Activated CD8-positive, alpha-beta T cell treated with anti-CD3 and anti-CD28 coated beads for 36 hours (primary cell): ENCODE measurements at regions of chr7 and their contacts with region 1.

Region 1: GRCh38 chr7:106285051-106285854 is 470 bp upstream of the NAMPT start:
- DNase-seq: peak; percentile 100
- ATAC-seq: peak; percentile 85
- H3K4me3 Mint-ChIP-seq: peak overlapping the region; percentile 88
- H3K27ac Mint-ChIP-seq: peak overlapping the region; percentile 99
- H3K4me1 Mint-ChIP-seq: peaks cover 35% of the 10 kb centered on the region
- H3K27me3 Mint-ChIP-seq: no peaks in the 10 kb centered on the region
- CTCF ChIP-seq: no peak

Region 2: DNA sequence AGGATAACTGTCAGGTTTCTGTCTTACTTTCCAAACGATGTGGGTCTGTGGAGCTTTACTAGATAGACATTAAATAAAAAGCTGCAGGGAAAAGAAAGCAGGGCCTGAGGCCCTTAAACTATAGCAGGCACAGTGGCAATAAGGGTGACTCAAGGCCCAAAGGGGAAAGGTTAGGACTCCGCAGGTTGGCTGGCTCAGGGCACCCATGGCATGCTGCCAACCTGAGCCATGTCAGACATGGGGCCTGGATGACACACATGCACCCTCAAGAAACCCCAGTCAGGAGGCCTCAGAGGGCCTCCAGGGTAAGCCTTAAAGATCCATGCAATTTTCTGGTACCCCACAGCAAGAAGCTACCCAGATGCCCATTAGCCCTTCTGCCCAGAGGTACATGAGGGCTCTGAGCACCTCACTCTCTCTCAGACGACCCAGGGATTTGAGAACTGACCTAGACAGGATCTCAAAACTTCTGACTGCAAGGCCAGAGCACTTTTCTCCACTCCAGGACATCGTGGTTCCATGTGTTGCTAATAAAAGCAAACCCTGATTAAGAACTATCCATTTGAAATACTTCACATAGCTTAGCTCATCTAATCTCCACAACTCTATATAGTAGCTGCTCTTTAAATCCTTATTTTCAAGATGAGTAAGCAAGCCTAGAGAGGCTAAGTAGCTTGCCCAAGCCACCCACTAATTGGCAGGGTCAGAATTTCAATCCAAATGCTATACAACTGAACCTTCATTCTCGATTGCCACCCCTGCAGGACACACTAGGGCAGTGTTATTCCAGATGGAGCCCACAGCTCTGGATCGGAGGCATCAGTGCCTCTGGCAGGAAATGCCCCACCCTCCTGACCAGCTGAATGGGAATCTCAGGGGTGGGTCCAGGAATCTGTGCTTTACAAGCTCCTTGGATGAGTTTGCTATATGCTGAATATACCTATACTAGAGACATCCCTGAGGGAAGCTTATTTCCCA is 571.5 kb before region 1 on chr7:
- CTCF ChIA-PET with region 1: no interaction called
- POLR2A ChIA-PET with region 1: no interaction called
- intact Hi-C with region 1: no loop called
- DNase-seq: no peak
- ATAC-seq: no peak
- H3K4me3 Mint-ChIP-seq: no peak overlapping the region
- H3K27ac Mint-ChIP-seq: no peak overlapping the region
- H3K4me1 Mint-ChIP-seq: no peaks in the 10 kb centered on the region
- H3K27me3 Mint-ChIP-seq: no peaks in the 10 kb centered on the region
- CTCF ChIP-seq: no peak

Region 3: DNA sequence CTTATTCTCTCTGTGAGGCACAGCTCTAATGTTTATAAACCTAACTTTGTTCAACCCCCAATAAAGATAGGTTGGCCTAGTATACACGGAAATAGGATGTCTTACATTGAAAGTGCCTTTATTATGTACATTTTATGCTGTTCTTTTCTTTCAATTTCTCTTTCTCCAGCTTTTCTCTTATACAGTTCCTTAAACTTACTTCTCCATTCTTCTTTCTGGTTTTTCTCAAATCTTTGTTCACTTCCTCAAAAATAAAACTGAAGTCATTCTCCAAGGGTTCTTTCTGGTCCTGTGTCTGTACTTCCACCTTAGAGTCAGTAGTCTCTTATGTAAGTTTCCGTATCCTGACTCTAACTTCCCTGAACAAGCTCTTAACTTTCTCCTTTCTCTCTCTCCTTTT is 28.7 kb after region 1 on chr7:
- CTCF ChIA-PET with region 1: interaction called, 4 read pairs
- POLR2A ChIA-PET with region 1: interaction called, 4 read pairs
- intact Hi-C with region 1: loop called (anchors 2 kb)
- DNase-seq: no peak
- ATAC-seq: no peak
- H3K4me3 Mint-ChIP-seq: no peak overlapping the region
- H3K27ac Mint-ChIP-seq: peak overlapping the region; percentile 60
- H3K4me1 Mint-ChIP-seq: peaks cover 21% of the 10 kb centered on the region
- H3K27me3 Mint-ChIP-seq: peaks cover 27% of the 10 kb centered on the region
- CTCF ChIP-seq: no peak

Region 4: DNA sequence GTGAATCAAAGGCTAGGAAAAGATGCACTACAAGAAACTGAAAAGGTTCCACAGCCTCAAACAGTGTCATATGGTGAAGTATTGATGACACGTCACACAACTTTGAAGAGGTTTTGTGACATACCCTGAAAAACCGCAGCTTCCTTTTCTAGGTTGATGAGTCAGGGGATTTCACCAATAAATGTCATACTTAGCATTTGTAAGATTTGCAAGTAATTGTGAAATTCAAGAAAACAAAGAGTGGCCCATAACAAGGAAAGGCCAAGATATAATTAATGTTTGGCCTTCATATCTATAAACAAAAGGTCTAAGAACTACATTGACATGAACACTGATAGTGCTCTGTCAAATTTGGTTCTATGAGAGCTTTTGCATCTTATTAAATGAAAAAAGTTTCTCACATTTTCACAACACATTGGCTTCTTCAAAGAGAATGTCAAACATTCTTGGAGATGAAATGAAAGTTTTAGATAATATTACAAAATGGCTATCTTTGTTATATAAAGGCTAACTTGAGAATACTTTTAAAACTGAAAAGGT is 61.5 kb after region 1 on chr7:
- CTCF ChIA-PET with region 1: interaction called, 10 read pairs
- POLR2A ChIA-PET with region 1: interaction called, 111 read pairs
- intact Hi-C with region 1: loop called (anchors 1 kb)
- DNase-seq: peak; percentile 75
- ATAC-seq: peak; percentile 67
- H3K4me3 Mint-ChIP-seq: peak overlapping the region; percentile 67
- H3K27ac Mint-ChIP-seq: peak overlapping the region; percentile 100
- H3K4me1 Mint-ChIP-seq: peaks cover 52% of the 10 kb centered on the region
- H3K27me3 Mint-ChIP-seq: peaks cover 6% of the 10 kb centered on the region
- CTCF ChIP-seq: no peak

Region 5: GRCh38 chr7:106425017-106425719 is 139.9 kb after region 1 on chr7:
- CTCF ChIA-PET with region 1: interaction called, 6 read pairs
- POLR2A ChIA-PET with region 1: interaction called, 44 read pairs
- intact Hi-C with region 1: loop called (anchors 5 kb)
- DNase-seq: peak; percentile 93
- ATAC-seq: peak; percentile 88
- H3K4me3 Mint-ChIP-seq: peak overlapping the region; percentile 71
- H3K27ac Mint-ChIP-seq: peak overlapping the region; percentile 98
- H3K4me1 Mint-ChIP-seq: peaks cover 72% of the 10 kb centered on the region
- H3K27me3 Mint-ChIP-seq: peaks cover under 1% of the 10 kb centered on the region
- CTCF ChIP-seq: no peak

Region 6: GRCh38 chr7:106471686-106472440 is 186.6 kb after region 1 on chr7:
- CTCF ChIA-PET with region 1: no interaction called
- POLR2A ChIA-PET with region 1: no interaction called
- intact Hi-C with region 1: no loop called
- DNase-seq: no peak
- ATAC-seq: no peak
- H3K4me3 Mint-ChIP-seq: no peak overlapping the region
- H3K27ac Mint-ChIP-seq: peak overlapping the region; percentile 17
- H3K4me1 Mint-ChIP-seq: peaks cover 16% of the 10 kb centered on the region
- H3K27me3 Mint-ChIP-seq: peaks cover 24% of the 10 kb centered on the region
- CTCF ChIP-seq: no peak

Region 7: DNA sequence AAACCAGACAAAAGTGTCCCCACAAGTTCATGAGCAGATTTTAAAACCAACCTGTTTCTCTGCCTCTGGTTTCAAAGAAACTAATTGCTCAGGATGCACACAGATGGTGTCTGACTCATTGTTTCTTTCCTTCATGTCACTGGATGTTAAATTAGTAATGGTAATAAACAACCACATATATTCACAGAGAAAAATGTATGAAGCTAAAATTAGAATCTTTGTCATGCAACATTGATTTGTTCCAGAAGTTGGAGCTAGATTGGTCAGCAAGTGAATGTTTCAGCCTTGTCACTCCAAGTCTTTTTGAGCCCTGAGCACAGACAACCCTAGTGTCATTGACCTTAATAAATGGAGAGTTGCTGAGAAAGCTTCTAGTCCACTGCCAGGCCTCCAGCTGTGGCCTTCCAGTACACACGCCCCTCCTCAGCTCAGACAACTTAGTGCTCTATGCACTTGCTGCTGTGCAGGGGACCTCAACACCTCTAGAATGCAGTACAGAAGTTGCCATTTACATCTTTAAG is 199.8 kb after region 1 on chr7:
- CTCF ChIA-PET with region 1: no interaction called
- POLR2A ChIA-PET with region 1: interaction called, 6 read pairs
- intact Hi-C with region 1: loop called (anchors 5 kb)
- DNase-seq: peak; percentile 27
- ATAC-seq: peak; percentile 72
- H3K4me3 Mint-ChIP-seq: peak overlapping the region; percentile 16
- H3K27ac Mint-ChIP-seq: peak overlapping the region; percentile 89
- H3K4me1 Mint-ChIP-seq: peaks cover 60% of the 10 kb centered on the region
- H3K27me3 Mint-ChIP-seq: peaks cover 7% of the 10 kb centered on the region
- CTCF ChIP-seq: no peak